ENCODE measurements at regions of chr9 and their contacts with region 1.

Region 1: DNA sequence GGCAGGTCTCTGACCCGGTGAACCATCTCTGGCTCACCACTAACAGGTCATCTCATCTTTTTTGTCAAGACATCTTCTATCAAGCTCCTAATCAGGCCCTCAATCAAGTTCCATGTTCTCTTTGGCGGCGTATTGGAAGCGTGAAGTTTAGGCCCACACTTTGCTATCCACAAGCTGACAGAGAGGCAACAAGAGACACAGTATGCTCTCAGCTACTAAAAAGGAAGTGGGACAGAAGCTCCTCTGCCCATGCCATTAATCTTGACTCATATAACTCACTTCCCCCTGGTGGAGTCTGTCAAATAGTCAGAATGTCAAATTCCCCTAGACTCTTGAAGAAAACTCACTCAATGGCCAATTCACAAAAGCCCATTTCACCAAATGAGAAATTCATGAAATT is 77.6 kb upstream of the TMC1 start:
- DNase-seq: peak; percentile 57
- ATAC-seq: peak; percentile 41
- H3K4me3 ChIP-seq: no peak overlapping the region
- H3K27ac ChIP-seq: peak overlapping the region; percentile 83
- H3K4me1 ChIP-seq: peaks cover 55% of the 10 kb centered on the region
- H3K27me3 ChIP-seq: no peaks in the 10 kb centered on the region
- CTCF ChIP-seq: no peak

Region 2: DNA sequence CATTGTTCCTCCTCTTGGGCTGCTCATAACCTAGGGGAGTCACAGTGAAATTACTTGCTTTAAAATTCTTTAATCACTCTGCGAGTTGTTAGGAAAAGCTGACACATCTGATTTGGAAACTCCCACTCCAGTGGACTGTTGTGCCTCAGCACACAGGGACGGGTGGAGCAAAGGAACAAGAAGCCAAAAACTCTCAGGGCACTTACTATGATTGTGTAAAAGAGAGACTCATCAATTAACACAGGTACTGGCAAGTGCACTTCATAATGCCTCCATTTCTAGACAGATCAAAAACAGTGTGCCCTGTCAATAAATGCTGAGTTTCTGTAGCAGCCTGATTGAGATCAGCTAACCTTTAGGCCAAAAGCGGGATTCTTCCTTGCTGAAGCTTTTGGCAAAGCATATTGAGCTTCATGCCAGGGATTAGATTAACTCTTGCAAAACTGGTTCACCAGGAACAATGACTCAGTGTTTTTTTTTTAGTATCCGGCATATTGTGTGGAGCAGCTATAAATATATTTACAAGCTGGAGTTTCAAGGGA is 133.4 kb after region 1 on chr9:
- CTCF ChIA-PET with region 1: no interaction called
- POLR2A ChIA-PET with region 1: no interaction called
- intact Hi-C with region 1: loop called (anchors 5 kb)
- DNase-seq: peak; percentile 93
- ATAC-seq: peak; percentile 27
- H3K4me3 ChIP-seq: peak overlapping the region; percentile 33
- H3K27ac ChIP-seq: peak overlapping the region; percentile 94
- H3K4me1 ChIP-seq: peaks cover 71% of the 10 kb centered on the region
- H3K27me3 ChIP-seq: no peaks in the 10 kb centered on the region
- CTCF ChIP-seq: no peak

Region 3: GRCh38 chr9:72592502-72593403 is 148.9 kb after region 1 on chr9:
- CTCF ChIA-PET with region 1: no interaction called
- POLR2A ChIA-PET with region 1: no interaction called
- intact Hi-C with region 1: loop called (anchors 2 kb)
- DNase-seq: peak; percentile 66
- ATAC-seq: peak; percentile 75
- H3K4me3 ChIP-seq: no peak overlapping the region
- H3K27ac ChIP-seq: no peak overlapping the region
- H3K4me1 ChIP-seq: peaks cover 4% of the 10 kb centered on the region; the same call in 1 of the 2 replicates
- H3K27me3 ChIP-seq: no peaks in the 10 kb centered on the region
- CTCF ChIP-seq: peak; percentile 81

Measured in PC-3 (cell line).